ENCODE measurements at regions of chr9 and their contacts with region 1.

Region 1: DNA sequence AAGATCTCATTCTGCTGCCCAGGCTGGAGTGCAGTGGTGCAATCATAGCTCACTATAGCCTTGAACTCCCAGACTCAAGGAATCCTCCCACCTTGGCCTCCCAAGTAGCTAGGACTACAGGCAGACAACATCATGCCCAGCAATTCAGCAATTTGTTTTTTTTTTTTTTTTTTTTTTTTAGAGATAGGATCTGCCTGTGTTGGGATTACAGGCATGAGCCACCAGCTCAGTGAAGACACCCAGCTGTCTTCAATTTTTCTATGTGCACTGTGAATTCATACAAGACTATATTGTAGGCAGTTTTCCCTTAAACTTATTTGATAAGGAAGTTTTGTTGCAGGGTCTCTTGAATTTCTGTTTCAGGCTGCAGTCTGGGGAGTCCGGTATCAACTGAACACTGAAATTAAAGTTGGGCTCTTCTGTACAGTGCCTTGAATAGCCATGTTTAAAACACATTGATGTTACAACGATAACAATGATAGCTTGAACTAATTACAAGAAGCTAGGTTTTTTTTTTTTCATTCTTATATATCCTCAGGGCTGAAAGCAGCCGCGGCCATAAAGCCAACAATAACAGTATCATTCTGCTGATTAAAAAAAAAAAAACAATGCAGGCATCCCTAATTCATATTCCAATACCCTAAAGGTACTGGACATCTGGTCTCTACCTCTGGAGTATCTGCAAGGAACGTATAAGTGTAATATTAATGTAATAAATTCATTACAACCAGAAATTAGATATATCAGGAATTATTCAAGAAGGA is 63.5 kb downstream of the MPDZ start:
- DNase-seq: no peak
- H3K4me3 ChIP-seq: no peak overlapping the region
- H3K27ac ChIP-seq: no peak overlapping the region
- H3K4me1 ChIP-seq: no peaks in the 10 kb centered on the region
- CTCF ChIP-seq: no peak

Region 2: GRCh38 chr9:13267743-13268142 is 51.8 kb after region 1 on chr9:
- CTCF ChIA-PET with region 1: no interaction called
- POLR2A ChIA-PET with region 1: interaction called, 4 read pairs
- intact Hi-C with region 1: loop called (anchors 1 kb)
- DNase-seq: no peak
- H3K4me3 ChIP-seq: no peak overlapping the region
- H3K27ac ChIP-seq: no peak overlapping the region
- H3K4me1 ChIP-seq: no peaks in the 10 kb centered on the region
- CTCF ChIP-seq: no peak

Region 3: GRCh38 chr9:13728917-13729811 is 513.2 kb after region 1 on chr9:
- CTCF ChIA-PET with region 1: no interaction called
- POLR2A ChIA-PET with region 1: no interaction called
- intact Hi-C with region 1: no loop called
- DNase-seq: no peak
- H3K4me3 ChIP-seq: no peak overlapping the region
- H3K27ac ChIP-seq: no peak overlapping the region
- H3K4me1 ChIP-seq: no peaks in the 10 kb centered on the region
- CTCF ChIP-seq: no peak

Measured in OCI-LY7 (cell line).